ENCODE measurements at regions of chr16 and their contacts with region 1.

Region 1: DNA sequence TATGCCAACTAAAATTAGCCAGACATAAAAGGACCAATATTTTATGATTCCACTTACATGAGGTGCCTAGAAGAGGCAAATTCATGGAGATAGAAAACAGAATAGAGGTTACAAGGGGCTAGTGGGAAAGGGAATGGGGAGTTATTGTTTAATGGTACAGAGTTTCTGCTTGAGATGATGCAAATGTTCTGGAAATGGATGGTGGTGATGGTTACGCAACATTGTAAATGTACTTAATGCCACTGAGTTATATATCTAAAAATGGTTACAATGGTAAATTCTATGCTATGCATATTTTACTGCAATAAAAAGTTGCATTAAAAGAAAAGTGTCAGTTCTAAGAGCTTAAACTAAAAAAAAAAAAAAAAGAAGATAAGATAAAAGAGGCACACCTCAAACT is 17.9 kb downstream of the MT1X start:
- DNase-seq: no peak
- H3K4me3 ChIP-seq: no peak overlapping the region
- H3K27ac ChIP-seq: no peak overlapping the region
- H3K4me1 ChIP-seq: peaks cover 0 to 4% (median 0%) of the 10 kb centered on the region in 4 donors
- H3K27me3 ChIP-seq: peaks cover 0 to under 1% of the 10 kb centered on the region in 2 donors
- CTCF ChIP-seq: no peak

Region 2: DNA sequence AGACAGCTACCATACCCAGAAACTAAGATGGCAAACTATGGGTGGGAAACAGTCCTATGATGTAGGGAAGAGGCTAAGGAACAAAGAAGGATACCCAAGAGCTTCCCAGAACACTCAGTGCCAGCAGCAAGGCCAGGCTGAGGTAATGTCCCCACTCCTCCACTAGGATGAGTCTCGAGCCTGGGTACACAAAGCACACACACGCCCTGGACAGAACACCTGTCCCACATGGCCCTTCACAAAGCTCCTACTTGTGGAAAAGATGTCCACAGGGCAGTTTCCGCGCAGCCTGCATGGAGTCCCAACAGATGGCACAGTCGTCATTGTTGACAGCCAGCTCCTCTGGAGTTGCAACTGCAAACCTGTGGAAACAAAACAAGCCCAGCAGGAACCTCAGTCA is 298.7 kb before region 1 on chr16:
- intact Hi-C with region 1: no loop called
- DNase-seq: no peak
- H3K4me3 ChIP-seq: no peak overlapping the region
- H3K27ac ChIP-seq: no peak overlapping the region
- H3K4me1 ChIP-seq: no peaks in the 10 kb centered on the region
- H3K27me3 ChIP-seq: no peaks in the 10 kb centered on the region
- CTCF ChIP-seq: no peak

Region 3: DNA sequence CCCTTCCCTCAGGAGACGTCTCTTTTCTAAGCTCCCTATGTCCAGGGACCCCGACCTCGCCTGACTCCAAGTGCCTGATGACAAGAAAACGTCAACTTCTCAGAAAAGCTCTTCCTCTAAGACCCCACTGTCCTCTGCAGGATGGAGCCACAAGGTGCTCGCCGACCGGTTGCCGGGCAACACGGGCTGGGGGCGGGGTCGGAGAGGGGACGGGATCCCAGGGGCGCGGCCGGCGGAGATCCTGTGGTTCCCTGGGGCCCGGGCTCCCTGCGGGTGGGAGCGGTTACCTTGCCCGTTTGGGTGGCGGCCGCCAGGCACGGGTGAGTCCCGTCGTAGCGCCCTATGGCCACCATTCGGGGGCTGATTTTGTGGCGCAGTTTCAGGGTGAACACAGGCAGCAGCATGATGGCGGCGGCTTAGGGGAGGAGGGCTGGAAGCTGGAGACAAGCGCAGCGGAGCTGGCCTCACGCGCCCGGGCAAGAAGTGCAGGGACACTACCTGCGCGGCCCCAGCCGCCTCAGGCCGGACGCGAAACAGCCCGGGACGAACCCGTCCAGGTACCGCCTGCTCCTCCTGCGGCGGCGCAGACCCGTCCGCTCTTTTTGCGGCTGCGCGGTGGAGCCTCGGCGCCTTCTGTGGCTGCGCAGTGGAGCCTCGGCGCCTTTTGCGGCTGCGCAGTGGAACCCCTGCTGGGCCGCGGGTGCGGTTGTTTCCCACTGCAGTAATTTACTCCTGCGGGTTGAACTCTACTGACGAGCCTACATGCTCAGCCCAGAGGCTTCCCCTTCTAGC is 180.5 kb before region 1 on chr16 and contains the start of gene BBS2:
- intact Hi-C with region 1: loop called (anchors 5 kb)
- DNase-seq: peak; percentile 86 to 92
- H3K4me3 ChIP-seq: peak within 1 kb of the TSS; percentile 96
- H3K27ac ChIP-seq: peak within 1 kb of the TSS; percentile 93 to 94
- H3K4me1 ChIP-seq: peaks cover 0 to 41% (median 32%) of the 10 kb centered on the region in 4 donors
- H3K27me3 ChIP-seq: no peaks in the 10 kb centered on the region
- CTCF ChIP-seq: peak in 1 of 2 experiments; percentile 26

Region 4: GRCh38 chr16:56576585-56577293 is 123.5 kb before region 1 on chr16:
- intact Hi-C with region 1: loop called (anchors 5 kb)
- DNase-seq: peak; percentile 61 to 78
- H3K4me3 ChIP-seq: no peak overlapping the region
- H3K27ac ChIP-seq: no peak overlapping the region
- H3K4me1 ChIP-seq: peaks cover 0 to 9% (median 0%) of the 10 kb centered on the region in 4 donors
- H3K27me3 ChIP-seq: no peaks in the 10 kb centered on the region
- CTCF ChIP-seq: peak; percentile 57 to 73

Region 5: DNA sequence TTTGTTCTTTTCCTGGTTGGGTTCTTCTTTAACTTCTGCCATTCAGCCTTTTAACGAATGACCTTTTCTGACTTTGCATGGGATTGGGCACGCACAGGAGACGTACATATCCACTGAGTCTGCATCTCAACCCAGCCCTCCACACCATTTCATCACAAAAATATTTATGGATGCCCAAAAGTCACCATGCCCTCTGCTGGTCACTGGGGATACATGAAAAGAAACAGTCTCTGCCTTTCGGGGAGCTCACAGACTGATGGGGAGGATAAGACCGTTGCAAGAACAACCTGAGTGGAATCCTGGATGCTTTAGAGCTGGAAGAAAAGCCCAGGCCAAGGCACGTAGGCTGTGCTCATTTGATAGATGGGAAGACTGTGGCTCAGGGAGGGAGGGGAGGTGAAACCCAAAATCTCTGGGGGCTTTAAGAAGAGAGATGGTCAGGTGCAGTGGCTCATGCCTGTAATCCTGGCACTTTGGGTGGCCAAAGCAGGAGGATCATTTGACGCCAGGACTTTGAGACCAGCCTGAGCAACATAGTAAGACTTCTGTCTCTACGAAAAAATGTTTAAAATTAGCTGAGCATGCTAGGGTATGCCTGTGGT is 99.7 kb before region 1 on chr16:
- intact Hi-C with region 1: loop called (anchors 5 kb)
- DNase-seq: peak in 1 of 2 donors; percentile 46
- H3K4me3 ChIP-seq: no peak overlapping the region
- H3K27ac ChIP-seq: no peak overlapping the region
- H3K4me1 ChIP-seq: peaks cover 0 to 2% (median 0%) of the 10 kb centered on the region in 4 donors
- H3K27me3 ChIP-seq: peaks cover 0 to 3% of the 10 kb centered on the region in 2 donors
- CTCF ChIP-seq: peak; percentile 55 to 64

Region 6: DNA sequence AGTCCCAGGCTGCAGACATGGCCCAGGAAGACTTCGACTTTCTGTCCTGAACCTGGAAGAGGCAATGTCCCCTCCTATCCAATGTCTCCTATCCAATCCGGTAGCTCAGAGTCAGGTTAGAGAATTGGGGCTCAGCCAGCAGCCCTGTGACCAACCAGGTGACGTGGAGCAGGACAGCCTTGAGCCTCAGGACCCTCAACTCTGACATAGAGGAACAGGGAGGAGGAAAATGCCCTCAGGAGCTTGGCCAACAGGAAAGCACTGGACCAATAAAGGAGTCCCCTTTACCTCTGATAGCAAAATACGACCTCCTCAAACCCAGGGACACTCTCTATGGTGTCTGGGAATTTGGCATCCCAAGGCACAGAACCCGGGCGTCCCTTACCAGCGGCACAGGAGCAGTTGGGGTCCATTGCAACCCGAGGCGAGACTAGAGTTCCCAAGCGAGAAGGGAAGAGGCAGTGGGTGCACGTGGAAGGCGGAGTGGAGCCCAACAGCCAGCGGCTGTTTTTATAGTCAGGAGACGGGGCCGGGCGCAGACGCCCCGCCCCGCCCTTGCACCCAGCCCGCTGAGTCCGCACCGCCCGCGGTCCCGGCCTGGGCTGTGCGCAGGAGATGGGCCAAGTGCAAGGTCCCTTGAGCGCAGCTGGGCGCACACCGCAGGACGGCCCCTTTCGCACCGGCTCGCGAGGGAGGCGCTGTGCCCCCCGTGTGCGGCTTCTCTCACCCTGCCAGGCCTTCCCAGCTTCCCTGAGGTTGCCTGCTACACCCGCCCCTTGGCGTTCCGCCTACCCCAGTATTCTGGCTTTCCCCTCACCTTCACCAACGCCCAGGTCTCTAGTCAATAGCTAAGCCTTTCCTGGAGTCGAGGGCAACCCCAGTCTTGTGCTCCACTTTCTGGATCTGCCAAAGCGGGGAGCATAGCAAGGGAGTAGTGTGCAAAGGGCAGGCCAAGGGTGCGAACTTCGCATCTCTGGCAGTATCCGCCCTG is 32.3 kb before region 1 on chr16 and contains the start of gene MT1G:
- intact Hi-C with region 1: loop called (anchors 5 kb)
- DNase-seq: peak in 1 of 2 donors; percentile 76
- H3K4me3 ChIP-seq: peak within 1 kb of the TSS in 1 of 2 donors; percentile 28
- H3K27ac ChIP-seq: no peak within 1 kb of the TSS
- H3K4me1 ChIP-seq: peaks cover 0 to 24% (median 19%) of the 10 kb centered on the region in 4 donors
- H3K27me3 ChIP-seq: peaks cover 3 to 90% of the 10 kb centered on the region in 2 donors
- CTCF ChIP-seq: no peak

Region 7: GRCh38 chr16:56742030-56742984 is 42.1 kb after region 1 on chr16:
- intact Hi-C with region 1: no loop called
- DNase-seq: no peak
- H3K4me3 ChIP-seq: no peak overlapping the region
- H3K27ac ChIP-seq: peak overlapping the region in 1 of 2 donors; percentile 30
- H3K4me1 ChIP-seq: peaks cover 0 to 38% (median 7%) of the 10 kb centered on the region in 4 donors
- H3K27me3 ChIP-seq: no peaks in the 10 kb centered on the region
- CTCF ChIP-seq: no peak

Region 8: DNA sequence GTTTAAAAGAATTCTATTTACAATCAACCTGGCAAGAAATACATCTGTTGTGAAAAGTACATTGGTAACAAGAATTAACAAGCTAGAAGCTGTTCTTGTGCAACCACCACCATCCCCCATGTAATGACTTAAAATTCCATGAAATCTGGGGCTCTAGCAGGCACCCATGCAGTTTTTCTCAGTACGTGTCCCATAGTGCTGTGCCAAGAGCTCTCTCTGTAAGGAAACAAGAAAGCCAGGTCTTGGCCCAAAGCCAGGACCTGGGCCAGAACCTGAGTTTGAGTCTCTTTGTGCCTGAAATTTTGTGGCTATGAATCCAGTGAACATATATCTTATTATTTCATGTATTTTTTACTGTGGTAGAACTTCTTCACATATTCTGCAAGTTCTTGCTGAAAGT is 76.4 kb after region 1 on chr16:
- intact Hi-C with region 1: no loop called
- DNase-seq: no peak
- H3K4me3 ChIP-seq: no peak overlapping the region
- H3K27ac ChIP-seq: no peak overlapping the region
- H3K4me1 ChIP-seq: peaks cover 0 to 23% (median 16%) of the 10 kb centered on the region in 4 donors
- H3K27me3 ChIP-seq: no peaks in the 10 kb centered on the region
- CTCF ChIP-seq: no peak